ENCODE measurements at regions of chr15 and their contacts with region 1.

Region 1: GRCh38 chr15:61275901-61276300 is 46.8 kb upstream of the RORA start:
- DNase-seq: peak; percentile 8
- H3K27ac ChIP-seq: no peak overlapping the region
- CTCF ChIP-seq: no peak

Region 2: GRCh38 chr15:61411902-61412510 is 136.1 kb after region 1 on chr15:
- CTCF ChIA-PET with region 1: no interaction called
- POLR2A ChIA-PET with region 1: no interaction called
- DNase-seq: no peak
- H3K27ac ChIP-seq: no peak overlapping the region
- CTCF ChIP-seq: no peak

Region 3: DNA sequence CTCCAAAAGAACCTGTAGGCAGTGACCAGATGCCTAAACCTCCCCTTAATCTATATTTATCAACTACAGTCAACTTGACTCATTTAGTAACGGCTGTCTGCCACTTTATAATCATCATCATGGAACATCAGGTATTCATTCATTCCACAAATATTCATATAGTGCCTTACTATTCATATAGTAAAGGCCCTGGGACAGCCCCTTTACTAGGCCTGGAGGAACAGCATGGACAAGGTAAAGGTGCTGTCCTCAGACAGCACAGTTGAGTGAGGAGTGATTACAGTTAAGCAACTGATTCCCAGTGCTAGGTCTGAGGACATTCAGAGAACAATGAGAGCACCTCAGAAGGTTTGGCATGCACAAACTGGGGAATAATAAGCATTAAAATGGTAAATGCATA is 299.7 kb after region 1 on chr15:
- CTCF ChIA-PET with region 1: interaction called, 10 read pairs
- POLR2A ChIA-PET with region 1: no interaction called
- DNase-seq: no peak
- H3K27ac ChIP-seq: no peak overlapping the region
- CTCF ChIP-seq: no peak